Activated CD8-positive, alpha-beta T cell treated with anti-CD3 and anti-CD28 coated beads, Interleukin-2, amount 10 ng/mL, durations not matched to agents 7 days and 5 days (primary cell): ENCODE measurements at regions of chr17 and their contacts with region 1.

Region 1: DNA sequence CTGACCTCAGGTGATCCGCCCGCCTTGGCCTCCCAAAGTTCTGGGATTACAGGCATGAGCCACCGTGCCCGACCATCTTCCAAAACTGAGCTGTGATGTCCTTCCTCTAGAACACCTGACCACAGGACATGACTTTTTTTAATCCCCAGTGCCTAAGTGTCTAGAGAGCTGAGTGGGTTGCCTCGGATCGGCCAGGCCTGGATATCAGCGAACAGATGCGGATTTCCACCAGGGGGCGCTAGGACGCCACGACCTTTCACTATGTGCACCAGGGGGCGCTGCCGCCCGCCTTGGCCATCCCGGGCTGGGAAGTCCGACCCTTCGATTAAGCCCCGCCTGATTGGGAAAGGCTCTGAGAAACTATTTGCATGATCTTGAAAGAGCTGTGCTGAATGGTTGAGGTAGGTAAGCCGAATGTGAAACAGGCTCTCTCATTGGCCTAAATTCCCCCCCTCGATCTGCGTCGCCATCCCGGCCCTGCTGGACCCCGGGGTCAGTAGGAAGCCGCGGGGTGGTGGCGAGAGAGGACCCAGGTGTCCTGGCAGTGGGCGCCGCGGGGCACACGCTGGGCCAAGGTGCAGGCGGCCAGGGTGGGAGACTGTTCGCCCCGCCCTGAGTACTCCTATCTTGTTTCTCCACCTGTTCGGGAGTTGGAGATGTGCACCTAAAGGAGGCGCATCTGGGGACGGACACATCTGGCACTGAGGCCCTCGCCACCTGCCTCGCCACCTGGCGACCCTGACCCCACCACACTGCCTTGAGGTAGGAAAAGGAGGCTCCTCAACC is at the start of gene ACBD4:
- DNase-seq: peak; percentile 98
- ATAC-seq: peak; percentile 92
- H3K4me3 Mint-ChIP-seq: peak within 1 kb of the TSS; percentile 88
- H3K27ac Mint-ChIP-seq: peak within 1 kb of the TSS; percentile 84
- H3K4me1 Mint-ChIP-seq: peaks cover 22% of the 10 kb centered on the region
- H3K27me3 Mint-ChIP-seq: peaks cover 10% of the 10 kb centered on the region
- total RNA-seq, gene ACBD4: 10.0 to 12.5 TPM

Region 2: GRCh38 chr17:44919885-44920564 is 215.4 kb before region 1 on chr17:
- CTCF ChIA-PET with region 1: interaction called, 11 read pairs
- POLR2A ChIA-PET with region 1: no interaction called
- DNase-seq: peak; percentile 76
- ATAC-seq: peak; percentile 84
- H3K4me3 Mint-ChIP-seq: no peak overlapping the region
- H3K27ac Mint-ChIP-seq: no peak overlapping the region
- H3K4me1 Mint-ChIP-seq: peaks cover 6% of the 10 kb centered on the region
- H3K27me3 Mint-ChIP-seq: peaks cover 11% of the 10 kb centered on the region

Region 3: GRCh38 chr17:45098869-45099616 is 36.3 kb before region 1 on chr17:
- CTCF ChIA-PET with region 1: interaction called, 11 read pairs
- POLR2A ChIA-PET with region 1: no interaction called
- DNase-seq: peak; percentile 82
- ATAC-seq: peak; percentile 93
- H3K4me3 Mint-ChIP-seq: no peak overlapping the region
- H3K27ac Mint-ChIP-seq: no peak overlapping the region
- H3K4me1 Mint-ChIP-seq: no peaks in the 10 kb centered on the region
- H3K27me3 Mint-ChIP-seq: no peaks in the 10 kb centered on the region

Region 4: GRCh38 chr17:45161019-45161825 is 25.8 kb after region 1 on chr17:
- CTCF ChIA-PET with region 1: interaction called, 344 read pairs
- POLR2A ChIA-PET with region 1: interaction called, 6 read pairs
- DNase-seq: peak; percentile 99
- ATAC-seq: peak; percentile 98
- H3K4me3 Mint-ChIP-seq: peak overlapping the region; percentile 99
- H3K27ac Mint-ChIP-seq: peak overlapping the region; percentile 98
- H3K4me1 Mint-ChIP-seq: peaks cover 43% of the 10 kb centered on the region
- H3K27me3 Mint-ChIP-seq: no peaks in the 10 kb centered on the region

Region 5: DNA sequence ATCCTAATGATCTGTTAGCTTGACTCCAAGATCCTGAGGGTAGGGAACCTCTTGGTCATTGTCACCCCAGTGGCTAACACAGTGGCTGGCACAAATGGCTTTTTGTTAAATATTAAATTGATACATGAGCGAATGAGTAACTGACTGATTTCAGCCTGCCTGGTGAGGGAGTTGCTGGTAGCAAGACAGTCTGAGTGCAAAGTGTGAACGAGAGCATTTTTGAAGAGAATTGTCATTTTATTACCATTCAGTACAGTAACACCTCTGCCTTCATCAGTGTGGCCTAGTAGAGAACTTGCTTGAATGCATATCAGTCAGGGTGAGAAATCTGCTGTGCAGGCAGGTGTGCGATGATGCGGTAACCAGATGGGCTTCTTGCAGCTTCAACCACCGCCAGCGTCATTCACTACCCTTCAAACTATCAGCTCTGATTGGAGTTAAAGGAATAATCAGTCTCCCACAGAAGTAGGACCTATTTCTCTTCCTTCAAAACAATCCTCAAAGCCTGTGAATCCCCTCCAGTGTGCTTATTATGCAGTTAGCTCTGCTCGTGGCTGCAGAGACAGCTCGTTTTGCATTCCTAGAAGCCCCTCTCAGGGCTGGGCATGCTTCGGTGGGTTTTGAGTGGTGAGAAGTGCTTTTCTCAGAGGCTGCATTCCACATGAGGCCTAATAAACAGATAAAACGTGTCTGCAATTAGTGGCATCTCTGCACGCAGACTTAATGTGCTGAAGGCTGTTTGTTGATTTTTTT is 55.3 kb after region 1 on chr17:
- CTCF ChIA-PET with region 1: interaction called, 365 read pairs
- POLR2A ChIA-PET with region 1: interaction called, 3 read pairs
- DNase-seq: no peak
- ATAC-seq: no peak
- H3K4me3 Mint-ChIP-seq: no peak overlapping the region
- H3K27ac Mint-ChIP-seq: no peak overlapping the region
- H3K4me1 Mint-ChIP-seq: no peaks in the 10 kb centered on the region
- H3K27me3 Mint-ChIP-seq: no peaks in the 10 kb centered on the region

Region 6: GRCh38 chr17:45228763-45229539 is 93.6 kb after region 1 on chr17:
- CTCF ChIA-PET with region 1: interaction called, 24 read pairs
- POLR2A ChIA-PET with region 1: no interaction called
- DNase-seq: peak; percentile 83
- ATAC-seq: peak; percentile 41
- H3K4me3 Mint-ChIP-seq: peak overlapping the region; percentile 100
- H3K27ac Mint-ChIP-seq: peak overlapping the region; percentile 94
- H3K4me1 Mint-ChIP-seq: peaks cover 93% of the 10 kb centered on the region
- H3K27me3 Mint-ChIP-seq: no peaks in the 10 kb centered on the region

Region 7: DNA sequence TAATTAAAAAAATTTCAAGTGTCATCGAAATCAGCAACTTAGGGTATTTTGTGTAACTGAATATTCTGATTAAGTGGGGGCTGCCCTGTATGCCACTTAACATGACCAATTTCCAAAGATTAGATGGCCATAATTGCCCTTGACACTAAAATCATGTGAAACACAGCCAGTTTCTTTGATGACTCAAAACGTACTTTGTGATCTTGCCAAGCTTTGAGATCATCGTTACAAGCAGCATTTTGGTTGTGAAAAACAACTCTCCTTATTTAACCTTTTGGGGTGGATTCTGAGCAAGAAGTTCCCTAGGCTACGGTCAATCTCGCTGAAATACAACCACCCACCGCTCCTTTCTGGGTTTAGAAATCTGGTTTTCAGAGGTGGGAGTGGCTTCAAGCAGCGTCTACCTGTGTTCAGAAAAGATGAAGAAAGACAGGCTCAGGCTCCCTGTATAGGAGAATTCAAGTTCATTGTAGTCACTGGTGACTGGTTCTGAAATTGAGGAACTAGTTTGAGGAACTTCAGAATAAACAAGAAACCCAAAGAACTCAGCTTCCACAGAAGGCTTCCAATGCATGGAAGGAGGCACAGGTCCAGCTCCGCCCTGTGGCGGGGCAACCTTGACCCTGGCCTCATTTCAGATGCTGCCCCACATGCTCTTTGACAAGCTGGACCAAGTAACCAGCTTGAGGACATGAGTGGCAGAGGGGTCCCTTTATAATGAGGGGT is 172.1 kb after region 1 on chr17:
- CTCF ChIA-PET with region 1: interaction called, 28 read pairs
- POLR2A ChIA-PET with region 1: no interaction called
- DNase-seq: peak; percentile 56
- ATAC-seq: peak; percentile 30
- H3K4me3 Mint-ChIP-seq: no peak overlapping the region
- H3K27ac Mint-ChIP-seq: peak overlapping the region; percentile 82
- H3K4me1 Mint-ChIP-seq: peaks cover 82% of the 10 kb centered on the region
- H3K27me3 Mint-ChIP-seq: no peaks in the 10 kb centered on the region

Region 8: GRCh38 chr17:45428050-45428617 is 292.7 kb after region 1 on chr17:
- CTCF ChIA-PET with region 1: no interaction called
- POLR2A ChIA-PET with region 1: no interaction called
- DNase-seq: peak; percentile 84
- ATAC-seq: peak; percentile 54
- H3K4me3 Mint-ChIP-seq: peak overlapping the region; percentile 59
- H3K27ac Mint-ChIP-seq: peak overlapping the region; percentile 81
- H3K4me1 Mint-ChIP-seq: peaks cover 36% of the 10 kb centered on the region
- H3K27me3 Mint-ChIP-seq: no peaks in the 10 kb centered on the region